Activated naive CD4-positive, alpha-beta T cell treated with anti-CD3 and anti-CD28 coated beads, Interleukin-2, amount 10 ng/mL, durations not matched to agents 7 days and 5 days (primary cell): ENCODE measurements at regions of chr5 and their contacts with region 1.

Region 1: GRCh38 chr5:170278611-170279452 is 18.7 kb downstream of the LCP2 start:
- DNase-seq: peak; percentile 93
- H3K4me3 Mint-ChIP-seq: peak overlapping the region; percentile 66
- H3K27ac Mint-ChIP-seq: peak overlapping the region; percentile 97
- H3K4me1 Mint-ChIP-seq: peaks cover 97% of the 10 kb centered on the region
- H3K27me3 Mint-ChIP-seq: no peaks in the 10 kb centered on the region

Region 2: GRCh38 chr5:170111088-170111785 is 167.6 kb before region 1 on chr5:
- CTCF ChIA-PET with region 1: no interaction called
- DNase-seq: no peak
- H3K4me3 Mint-ChIP-seq: no peak overlapping the region
- H3K27ac Mint-ChIP-seq: no peak overlapping the region
- H3K4me1 Mint-ChIP-seq: no peaks in the 10 kb centered on the region
- H3K27me3 Mint-ChIP-seq: peaks cover 37% of the 10 kb centered on the region

Region 3: GRCh38 chr5:170179626-170180025 is 99.2 kb before region 1 on chr5:
- CTCF ChIA-PET with region 1: no interaction called
- DNase-seq: no peak
- H3K4me3 Mint-ChIP-seq: no peak overlapping the region
- H3K27ac Mint-ChIP-seq: no peak overlapping the region
- H3K4me1 Mint-ChIP-seq: no peaks in the 10 kb centered on the region
- H3K27me3 Mint-ChIP-seq: peaks cover 24% of the 10 kb centered on the region

Region 4: DNA sequence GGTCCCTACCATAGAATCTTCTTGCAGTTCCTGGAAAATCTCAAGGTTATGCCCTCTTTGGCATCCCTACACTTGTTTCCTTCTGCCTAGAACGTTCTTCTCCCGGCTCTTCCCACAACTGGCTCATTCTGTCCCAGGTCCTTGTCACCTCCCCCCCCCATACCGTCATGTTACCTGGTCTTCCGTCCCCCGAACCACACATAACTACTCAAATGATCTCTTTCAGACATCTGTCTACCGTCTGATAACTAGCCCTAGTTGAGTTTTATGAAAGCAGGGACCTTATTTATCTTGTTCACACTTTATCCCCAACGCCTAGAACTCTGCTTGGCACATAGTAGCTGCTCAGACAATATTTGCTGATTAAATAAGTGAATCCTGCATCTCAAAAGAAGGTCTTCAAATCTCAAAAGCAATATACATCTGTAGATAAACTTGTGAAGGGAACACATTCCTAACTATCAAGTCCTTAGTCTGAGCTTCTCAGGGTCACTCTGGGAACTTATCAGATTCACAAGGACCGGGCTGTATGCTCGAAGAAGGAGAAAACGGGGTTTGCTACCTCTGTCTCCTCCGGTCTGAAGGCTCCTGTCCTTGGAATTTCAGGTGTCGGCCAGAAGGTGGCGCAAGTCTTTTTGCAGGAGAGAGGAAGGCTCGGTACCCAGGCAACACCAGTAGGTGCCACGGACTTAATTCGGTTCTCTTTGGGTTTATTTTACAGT is 11.2 kb before region 1 on chr5:
- CTCF ChIA-PET with region 1: interaction called, 13 read pairs
- DNase-seq: peak; percentile 87
- H3K4me3 Mint-ChIP-seq: peak overlapping the region; percentile 40
- H3K27ac Mint-ChIP-seq: peak overlapping the region; percentile 87
- H3K4me1 Mint-ChIP-seq: peaks cover 92% of the 10 kb centered on the region
- H3K27me3 Mint-ChIP-seq: no peaks in the 10 kb centered on the region

Region 5: GRCh38 chr5:170293273-170293672 is 14.4 kb after region 1 on chr5:
- CTCF ChIA-PET with region 1: interaction called, 465 read pairs
- DNase-seq: peak; percentile 68
- H3K4me3 Mint-ChIP-seq: peak overlapping the region; percentile 100
- H3K27ac Mint-ChIP-seq: peak overlapping the region; percentile 79
- H3K4me1 Mint-ChIP-seq: peaks cover 70% of the 10 kb centered on the region
- H3K27me3 Mint-ChIP-seq: no peaks in the 10 kb centered on the region

Region 6: GRCh38 chr5:170312666-170313065 is 33.8 kb after region 1 on chr5:
- CTCF ChIA-PET with region 1: interaction called, 465 read pairs
- DNase-seq: peak; percentile 53
- H3K4me3 Mint-ChIP-seq: peak overlapping the region; percentile 39
- H3K27ac Mint-ChIP-seq: peak overlapping the region; percentile 86
- H3K4me1 Mint-ChIP-seq: peaks cover 44% of the 10 kb centered on the region
- H3K27me3 Mint-ChIP-seq: peaks cover 7% of the 10 kb centered on the region

Region 7: GRCh38 chr5:170393235-170393634 is 114.4 kb after region 1 on chr5:
- CTCF ChIA-PET with region 1: no interaction called
- DNase-seq: peak; percentile 56
- H3K4me3 Mint-ChIP-seq: peak overlapping the region; percentile 4
- H3K27ac Mint-ChIP-seq: peak overlapping the region; percentile 64
- H3K4me1 Mint-ChIP-seq: peaks cover 38% of the 10 kb centered on the region
- H3K27me3 Mint-ChIP-seq: peaks cover 38% of the 10 kb centered on the region

Region 8: GRCh38 chr5:170420780-170421412 is 142.1 kb after region 1 on chr5:
- CTCF ChIA-PET with region 1: interaction called, 14 read pairs
- DNase-seq: peak; percentile 65
- H3K4me3 Mint-ChIP-seq: no peak overlapping the region
- H3K27ac Mint-ChIP-seq: no peak overlapping the region
- H3K4me1 Mint-ChIP-seq: peaks cover 15% of the 10 kb centered on the region
- H3K27me3 Mint-ChIP-seq: peaks cover 35% of the 10 kb centered on the region